IMR-90 (cell line): ENCODE measurements at regions of chr20 and their contacts with region 1.

Region 1: DNA sequence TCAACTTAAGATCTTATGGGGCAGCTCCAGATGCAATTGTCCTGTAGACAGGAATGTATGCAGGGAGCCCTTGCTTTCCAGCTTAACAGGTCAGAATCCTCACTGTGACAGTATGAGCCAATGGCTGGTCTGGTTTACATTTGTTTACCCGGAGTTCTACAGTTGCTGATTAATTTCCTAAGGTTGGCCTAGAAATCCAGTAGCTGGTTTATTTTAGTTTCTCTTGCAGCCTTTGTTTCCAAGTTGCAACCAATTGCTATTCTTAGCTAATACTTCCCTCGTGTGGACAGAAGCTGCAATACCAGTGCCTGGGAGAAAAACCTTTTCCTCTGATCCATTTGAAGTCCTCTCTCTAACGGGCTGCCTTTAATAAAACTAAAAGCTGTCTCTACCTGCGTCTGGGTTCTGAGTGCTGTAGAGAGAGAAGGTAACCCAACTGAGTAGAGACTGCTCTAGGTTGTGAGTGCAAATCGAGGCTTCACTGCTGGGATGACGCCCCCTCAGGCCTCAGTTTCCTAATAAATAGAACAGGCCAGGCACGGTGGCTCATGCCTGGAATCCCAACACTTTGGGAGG is 45.9 kb downstream of the ZNF217 start:
- DNase-seq: peak; percentile 76
- ATAC-seq: peak; percentile 94
- H3K4me3 ChIP-seq: no peak overlapping the region
- H3K27ac ChIP-seq: no peak overlapping the region
- H3K4me1 ChIP-seq: peaks cover 6% of the 10 kb centered on the region
- H3K27me3 ChIP-seq: no peaks in the 10 kb centered on the region
- CTCF ChIP-seq: peak; percentile 93
- POLR2A ChIP-seq: no peak
- RAD21 ChIP-seq: peak; percentile 92

Region 2: GRCh38 chr20:52242237-52243230 is 1305.2 kb before region 1 on chr20:
- CTCF ChIA-PET with region 1: interaction called, 3 read pairs
- POLR2A ChIA-PET with region 1: no interaction called
- dilution Hi-C with region 1: no loop called
- in situ Hi-C with region 1: no loop called
- intact Hi-C with region 1: loop called (anchors 2 kb)
- DNase-seq: peak; percentile 11
- ATAC-seq: no peak
- H3K4me3 ChIP-seq: no peak overlapping the region
- H3K27ac ChIP-seq: no peak overlapping the region
- H3K4me1 ChIP-seq: no peaks in the 10 kb centered on the region
- H3K27me3 ChIP-seq: no peaks in the 10 kb centered on the region; the same call in 1 of the 2 replicates
- CTCF ChIP-seq: peak; percentile 54
- POLR2A ChIP-seq: no peak
- RAD21 ChIP-seq: peak; percentile 38

Region 3: DNA sequence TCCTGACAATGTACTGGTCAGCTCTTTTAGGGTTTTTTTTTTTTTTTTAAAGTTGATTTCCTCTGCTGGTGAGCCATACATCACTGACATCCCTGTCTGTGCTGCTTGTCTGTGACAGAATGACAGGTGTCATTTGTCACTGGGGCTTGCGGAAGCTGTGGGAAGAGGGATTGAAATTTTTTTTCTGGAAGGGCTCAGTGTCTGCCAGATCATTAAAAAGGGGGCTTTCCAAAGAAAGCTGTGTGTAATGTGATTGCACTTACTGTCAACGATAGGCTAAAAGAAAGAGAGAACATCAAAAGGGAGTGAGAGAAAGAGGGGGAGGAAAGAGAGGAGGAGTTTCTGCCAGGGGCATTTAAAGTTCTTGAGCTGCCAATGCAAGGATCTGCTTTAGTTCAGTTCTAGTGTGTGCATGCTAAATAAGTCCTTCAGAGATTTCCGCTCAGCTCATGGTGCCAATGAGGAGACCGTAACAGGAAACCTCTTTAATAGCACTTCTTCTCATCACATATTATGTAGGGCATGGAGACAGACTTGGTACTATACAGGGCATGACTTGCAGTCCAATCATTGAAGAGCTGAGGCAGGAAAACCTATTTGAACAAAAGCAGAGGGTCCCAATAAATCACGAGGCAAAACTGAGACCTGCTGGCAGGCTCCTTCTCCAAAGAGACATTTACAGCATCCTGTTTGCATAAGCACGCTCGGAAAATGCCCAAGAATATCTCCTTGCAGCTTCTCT is 398.4 kb before region 1 on chr20:
- CTCF ChIA-PET with region 1: no interaction called
- POLR2A ChIA-PET with region 1: interaction called, 3 read pairs
- dilution Hi-C with region 1: no loop called
- in situ Hi-C with region 1: loop called (anchors 5 kb)
- intact Hi-C with region 1: no loop called
- DNase-seq: no peak
- ATAC-seq: no peak
- H3K4me3 ChIP-seq: no peak overlapping the region
- H3K27ac ChIP-seq: no peak overlapping the region
- H3K4me1 ChIP-seq: no peaks in the 10 kb centered on the region
- H3K27me3 ChIP-seq: no peaks in the 10 kb centered on the region
- CTCF ChIP-seq: no peak
- POLR2A ChIP-seq: no peak
- RAD21 ChIP-seq: no peak

Region 4: GRCh38 chr20:53216856-53217576 is 330.7 kb before region 1 on chr20:
- CTCF ChIA-PET with region 1: interaction called, 3 read pairs
- POLR2A ChIA-PET with region 1: no interaction called
- dilution Hi-C with region 1: no loop called
- in situ Hi-C with region 1: no loop called
- intact Hi-C with region 1: loop called (anchors 10 kb)
- DNase-seq: no peak
- ATAC-seq: no peak
- H3K4me3 ChIP-seq: no peak overlapping the region
- H3K27ac ChIP-seq: no peak overlapping the region
- H3K4me1 ChIP-seq: no peaks in the 10 kb centered on the region
- H3K27me3 ChIP-seq: no peaks in the 10 kb centered on the region; the same call in 1 of the 2 replicates
- CTCF ChIP-seq: peak; percentile 58
- POLR2A ChIP-seq: no peak
- RAD21 ChIP-seq: peak; percentile 54